ENCODE measurements at regions of chr7 and their contacts with region 1.

Region 1: DNA sequence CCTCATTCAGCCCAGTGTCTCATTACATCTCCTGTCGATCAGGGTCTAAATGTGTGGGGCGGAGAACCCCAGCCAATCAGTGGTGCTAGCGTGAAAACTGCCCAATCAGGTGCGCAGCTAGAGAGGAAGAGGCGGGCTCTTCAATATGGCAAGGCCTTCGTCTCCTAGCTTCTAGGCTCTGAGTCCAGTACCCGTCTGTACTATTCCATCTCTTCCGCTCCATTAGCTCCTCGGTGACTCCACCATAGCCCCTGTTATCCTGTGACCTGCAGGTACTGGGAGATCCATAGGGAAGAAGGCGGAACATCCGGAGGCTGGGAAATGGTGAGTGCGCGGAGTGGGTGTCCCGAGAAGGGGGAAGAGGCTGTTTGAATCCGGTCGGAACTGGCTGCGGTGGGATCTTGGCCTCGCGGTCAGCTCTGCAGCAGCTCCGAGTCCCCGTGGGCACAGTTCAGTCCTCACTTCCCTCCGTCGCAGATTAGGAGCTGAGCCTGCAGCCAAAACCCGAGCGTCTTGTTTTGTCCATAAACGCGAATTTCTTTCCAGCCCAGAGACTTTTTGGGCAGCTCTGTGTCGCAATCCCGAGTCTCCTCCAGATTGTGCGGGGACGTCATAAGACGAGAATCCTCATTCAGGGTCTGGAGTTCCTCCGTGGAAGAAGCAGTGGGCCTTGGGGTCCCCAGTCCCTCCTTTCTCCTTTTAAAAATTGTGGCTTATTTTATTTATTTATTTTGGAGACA is at the start of gene ZNF727:
- DNase-seq: peak in 7 of 14 experiments; percentile 2 to 50 (median 28)
- ATAC-seq: peak; percentile 96
- H3K4me3 ChIP-seq: peak within 1 kb of the TSS; percentile 4
- H3K4me3 Mint-ChIP-seq: peak within 1 kb of the TSS; percentile 88
- H3K27ac ChIP-seq: no peak within 1 kb of the TSS
- H3K27ac Mint-ChIP-seq: peak within 1 kb of the TSS; percentile 79
- H3K4me1 ChIP-seq: no peaks in the 10 kb centered on the region
- H3K4me1 Mint-ChIP-seq: peaks cover 9% of the 10 kb centered on the region
- H3K27me3 ChIP-seq: peaks cover 0 to 2% of the 10 kb centered on the region in 2 experiments
- H3K27me3 Mint-ChIP-seq: no peaks in the 10 kb centered on the region
- CTCF ChIP-seq: no peak
- total RNA-seq, gene ZNF727: 0.58 to 0.89 TPM

Region 2: GRCh38 chr7:63998549-63998948 is 46.9 kb before region 1 on chr7 and contains the start of gene ZNF722:
- CTCF ChIA-PET with region 1: no interaction called
- POLR2A ChIA-PET with region 1: no interaction called
- intact Hi-C with region 1: no loop called
- DNase-seq: no peak
- ATAC-seq: no peak
- H3K4me3 ChIP-seq: no peak within 1 kb of the TSS
- H3K4me3 Mint-ChIP-seq: no peak within 1 kb of the TSS
- H3K27ac ChIP-seq: no peak within 1 kb of the TSS
- H3K27ac Mint-ChIP-seq: no peak within 1 kb of the TSS
- H3K4me1 ChIP-seq: no peaks in the 10 kb centered on the region
- H3K4me1 Mint-ChIP-seq: no peaks in the 10 kb centered on the region
- H3K27me3 ChIP-seq: no peaks in the 10 kb centered on the region
- H3K27me3 Mint-ChIP-seq: no peaks in the 10 kb centered on the region
- CTCF ChIP-seq: no peak
- total RNA-seq, gene ZNF722: not detected

Region 3: DNA sequence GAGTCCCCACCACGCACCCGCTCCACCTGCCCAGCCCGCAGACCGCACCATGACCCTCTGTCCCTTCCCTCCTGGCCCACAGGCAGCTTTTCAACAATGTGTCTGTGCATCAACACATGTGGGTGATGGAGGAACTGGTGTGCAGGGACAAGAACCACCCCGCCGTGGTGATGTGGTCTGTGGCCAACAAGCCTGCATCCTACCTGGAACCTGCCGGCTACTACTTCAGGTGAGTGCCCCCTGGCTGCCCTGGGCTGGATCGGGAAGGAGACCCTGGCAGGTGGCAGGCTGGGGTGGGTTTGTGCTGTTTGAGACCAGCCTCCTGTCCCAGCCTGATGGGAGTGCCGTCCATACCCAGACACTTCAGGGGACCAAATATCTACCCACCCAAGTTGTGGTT is 69.3 kb after region 1 on chr7:
- CTCF ChIA-PET with region 1: no interaction called
- POLR2A ChIA-PET with region 1: no interaction called
- intact Hi-C with region 1: loop called in 1 of 2 experiments (anchors 10 kb)
- DNase-seq: no peak
- ATAC-seq: no peak
- H3K4me3 ChIP-seq: no peak overlapping the region
- H3K4me3 Mint-ChIP-seq: no peak overlapping the region
- H3K27ac ChIP-seq: no peak overlapping the region
- H3K27ac Mint-ChIP-seq: no peak overlapping the region
- H3K4me1 ChIP-seq: no peaks in the 10 kb centered on the region
- H3K4me1 Mint-ChIP-seq: no peaks in the 10 kb centered on the region
- H3K27me3 ChIP-seq: no peaks in the 10 kb centered on the region
- H3K27me3 Mint-ChIP-seq: no peaks in the 10 kb centered on the region
- CTCF ChIP-seq: no peak

Region 4: GRCh38 chr7:64183126-64183742 is 137.8 kb after region 1 on chr7:
- CTCF ChIA-PET with region 1: no interaction called
- POLR2A ChIA-PET with region 1: no interaction called
- intact Hi-C with region 1: no loop called
- DNase-seq: peak in 12 of 14 experiments; percentile 21 to 65 (median 30)
- ATAC-seq: no peak
- H3K4me3 ChIP-seq: no peak overlapping the region
- H3K4me3 Mint-ChIP-seq: no peak overlapping the region
- H3K27ac ChIP-seq: no peak overlapping the region
- H3K27ac Mint-ChIP-seq: no peak overlapping the region
- H3K4me1 ChIP-seq: peaks cover 7% of the 10 kb centered on the region
- H3K4me1 Mint-ChIP-seq: no peaks in the 10 kb centered on the region
- H3K27me3 ChIP-seq: peaks cover 0 to 4% of the 10 kb centered on the region in 2 experiments
- H3K27me3 Mint-ChIP-seq: peaks cover 14% of the 10 kb centered on the region
- CTCF ChIP-seq: peak; percentile 61

Measured in CD4-positive, alpha-beta T cell (primary cell).